Left ventricle myocardium superior (tissue), 1 donor: ENCODE measurements at regions of chr1 and their contacts with region 1.

Region 1: DNA sequence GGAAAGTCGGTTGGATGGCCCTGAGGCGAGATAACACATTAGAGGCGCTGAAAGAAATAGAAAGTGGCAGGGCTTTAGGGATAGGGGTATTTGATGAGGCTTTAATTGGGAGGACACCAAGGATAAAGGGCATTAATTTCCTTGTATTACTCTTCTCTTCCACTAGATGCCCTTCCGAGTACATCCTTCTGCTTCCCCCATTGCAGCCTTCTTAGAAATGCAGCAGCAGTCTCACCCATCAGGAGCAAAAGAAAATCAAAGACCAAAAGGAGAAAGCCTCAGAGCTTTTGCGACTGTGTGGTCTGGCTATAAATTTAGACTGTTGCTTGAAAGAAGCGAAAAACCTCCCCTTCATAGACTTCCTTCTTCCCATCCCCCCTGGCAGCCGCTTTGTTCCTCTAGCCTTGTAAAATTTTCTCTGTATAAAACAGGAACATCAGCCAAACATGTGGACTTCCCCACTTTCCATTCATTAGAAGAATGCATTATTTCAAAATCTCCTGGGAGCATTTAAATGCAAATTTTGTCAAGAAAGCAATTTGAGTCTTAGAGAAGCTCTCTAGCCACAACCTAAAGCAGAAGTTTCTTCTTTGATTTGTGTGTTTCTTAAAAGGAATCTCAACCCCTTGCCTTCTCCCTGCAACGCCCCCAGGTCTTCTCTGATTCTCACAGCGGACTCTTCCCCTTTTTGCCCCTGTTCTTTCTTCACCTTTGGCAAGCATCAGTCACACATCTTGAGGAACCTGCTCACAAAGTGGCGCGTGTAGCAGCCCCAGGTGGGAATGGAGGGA is 76.6 kb downstream of the NDUFS5 start:
- DNase-seq: no peak
- ATAC-seq: peak; percentile 36

Region 2: GRCh38 chr1:37883671-37884070 is 1219.1 kb before region 1 on chr1:
- intact Hi-C with region 1: no loop called
- DNase-seq: no peak
- ATAC-seq: no peak

Region 3: GRCh38 chr1:39189592-39190041 is 86.9 kb after region 1 on chr1:
- intact Hi-C with region 1: loop called (anchors 5 kb)
- DNase-seq: no peak
- ATAC-seq: no peak

Region 4: GRCh38 chr1:39239968-39240367 is 137.2 kb after region 1 on chr1:
- intact Hi-C with region 1: no loop called
- DNase-seq: no peak
- ATAC-seq: no peak

Region 5: DNA sequence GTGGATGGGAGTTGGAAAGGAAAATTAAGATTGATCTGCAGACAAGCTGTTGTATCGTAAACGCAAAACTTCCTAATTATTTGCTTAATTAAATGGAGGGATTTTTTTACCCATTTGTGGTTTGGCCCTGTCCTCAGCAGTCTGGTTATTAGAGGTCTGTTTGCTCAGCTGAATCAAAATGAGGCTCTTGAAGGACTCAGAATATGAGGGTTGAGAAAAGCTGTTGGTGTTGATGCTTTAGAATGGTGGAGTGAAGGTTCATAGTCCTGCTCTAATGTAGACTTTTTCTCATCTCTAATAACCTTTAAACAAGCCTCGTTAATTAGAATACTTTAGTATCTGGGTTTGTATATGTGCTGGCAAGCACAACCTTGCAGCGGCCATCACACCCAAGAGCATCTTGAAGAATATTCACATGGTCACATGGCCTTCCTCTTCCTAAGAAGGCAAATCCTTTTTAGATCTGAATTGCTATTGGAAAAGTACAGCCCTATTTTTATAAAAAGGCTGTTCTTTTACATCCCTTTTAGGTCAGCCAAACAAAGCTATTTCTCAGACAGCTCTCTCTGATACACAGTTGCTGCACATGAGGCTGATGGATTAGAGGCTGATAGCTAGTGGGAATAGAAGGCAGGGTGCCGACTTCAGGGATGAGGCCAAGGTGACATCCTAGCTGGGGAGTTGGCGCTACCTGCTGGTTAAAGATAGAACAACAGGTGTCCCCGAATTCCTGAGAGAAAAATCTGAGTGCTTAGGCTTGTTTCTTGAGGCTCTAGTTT is 155.6 kb after region 1 on chr1:
- intact Hi-C with region 1: loop called (anchors 10 kb)
- DNase-seq: peak; percentile 66
- ATAC-seq: peak; percentile 84